ENCODE measurements at regions of chr2 and their contacts with region 1.

Region 1: DNA sequence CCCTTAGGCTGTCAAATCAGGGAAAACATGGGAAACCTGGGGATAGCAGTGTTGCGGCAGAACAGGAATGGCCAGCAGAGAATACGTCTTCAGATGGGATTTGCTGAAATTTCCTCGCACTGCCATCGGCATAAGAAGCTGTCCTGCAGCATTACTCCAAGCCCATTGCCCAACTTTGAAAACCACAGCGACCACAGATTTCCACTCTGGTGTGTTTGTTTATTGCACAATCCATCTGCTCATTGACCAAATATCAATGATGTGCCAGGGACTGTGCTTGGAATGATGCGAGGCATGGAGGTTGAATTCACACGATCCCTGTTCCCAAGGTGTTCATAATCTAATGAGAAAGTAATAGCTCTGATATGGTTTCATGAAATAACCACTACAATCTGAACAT is 383.3 kb upstream of the MYT1L start:
- DNase-seq: no peak
- ATAC-seq: no peak

Region 2: GRCh38 chr2:2542966-2543611 is 171.3 kb before region 1 on chr2:
- intact Hi-C with region 1: loop called (anchors 5 kb)
- DNase-seq: no peak
- ATAC-seq: peak; percentile 38

Region 3: DNA sequence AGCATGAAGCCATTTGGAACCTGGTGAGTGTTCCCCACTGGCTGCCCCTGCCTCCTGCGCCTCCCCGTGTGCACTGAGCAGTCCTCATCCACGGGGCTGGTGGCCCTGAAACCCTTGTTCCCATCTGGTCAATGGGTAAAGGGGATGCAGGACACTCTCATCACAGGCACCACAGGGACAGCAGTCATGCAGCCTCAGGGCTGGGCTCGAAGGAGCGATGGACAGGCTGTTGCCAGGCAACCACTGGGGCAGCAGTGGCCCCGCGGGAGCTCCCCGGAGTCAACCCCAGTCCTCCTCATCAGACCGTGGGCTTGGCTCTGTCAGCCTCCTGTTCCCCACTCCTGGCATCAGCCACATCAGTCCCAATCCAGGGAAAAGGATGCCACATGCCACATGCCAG is 153.7 kb after region 1 on chr2:
- intact Hi-C with region 1: no loop called
- DNase-seq: no peak
- ATAC-seq: peak; percentile 55